ENCODE measurements at regions of chr2 and their contacts with region 1.

Region 1: DNA sequence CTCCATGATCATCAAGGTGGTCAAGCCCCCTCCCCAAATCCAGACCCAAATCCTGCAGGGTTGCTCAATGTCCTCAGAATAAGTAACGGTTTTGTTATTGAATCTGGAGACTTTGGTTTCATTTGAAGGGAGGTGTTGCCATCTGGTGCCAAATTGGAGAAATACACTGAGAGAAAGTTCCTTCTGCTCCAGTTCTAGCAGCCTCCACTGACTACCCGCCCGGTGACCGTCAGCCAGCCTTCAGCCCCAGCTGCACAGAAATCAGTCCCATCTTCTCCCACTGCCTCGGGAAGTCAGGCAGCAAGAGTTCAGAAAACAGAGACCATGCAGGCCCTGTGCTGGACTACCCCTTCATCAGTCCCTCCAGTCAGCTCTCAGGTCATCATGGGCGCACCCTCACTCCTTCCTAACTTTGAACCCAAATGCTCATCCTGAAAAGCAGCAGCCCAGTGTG is 38.7 kb downstream of the PKDCC start:
- DNase-seq: peak; percentile 71 to 80
- ATAC-seq: peak; percentile 69 to 84
- H3K4me3 ChIP-seq: no peak overlapping the region
- H3K27ac ChIP-seq: peak overlapping the region; percentile 73 to 80
- H3K4me1 ChIP-seq: peaks cover 48% of the 10 kb centered on the region
- CTCF ChIP-seq: peak; percentile 98
- EP300 ChIP-seq: no peak
- POLR2A ChIP-seq: no peak
- RAD21 ChIP-seq: peak; percentile 99 to 100

Region 2: GRCh38 chr2:41686156-41686555 is 400.4 kb before region 1 on chr2:
- CTCF ChIA-PET with region 1: no interaction called
- POLR2A ChIA-PET with region 1: no interaction called
- DNase-seq: no peak
- ATAC-seq: no peak
- H3K4me3 ChIP-seq: no peak overlapping the region
- H3K27ac ChIP-seq: no peak overlapping the region
- H3K4me1 ChIP-seq: no peaks in the 10 kb centered on the region
- CTCF ChIP-seq: no peak
- EP300 ChIP-seq: no peak
- POLR2A ChIP-seq: no peak
- RAD21 ChIP-seq: no peak

Region 3: DNA sequence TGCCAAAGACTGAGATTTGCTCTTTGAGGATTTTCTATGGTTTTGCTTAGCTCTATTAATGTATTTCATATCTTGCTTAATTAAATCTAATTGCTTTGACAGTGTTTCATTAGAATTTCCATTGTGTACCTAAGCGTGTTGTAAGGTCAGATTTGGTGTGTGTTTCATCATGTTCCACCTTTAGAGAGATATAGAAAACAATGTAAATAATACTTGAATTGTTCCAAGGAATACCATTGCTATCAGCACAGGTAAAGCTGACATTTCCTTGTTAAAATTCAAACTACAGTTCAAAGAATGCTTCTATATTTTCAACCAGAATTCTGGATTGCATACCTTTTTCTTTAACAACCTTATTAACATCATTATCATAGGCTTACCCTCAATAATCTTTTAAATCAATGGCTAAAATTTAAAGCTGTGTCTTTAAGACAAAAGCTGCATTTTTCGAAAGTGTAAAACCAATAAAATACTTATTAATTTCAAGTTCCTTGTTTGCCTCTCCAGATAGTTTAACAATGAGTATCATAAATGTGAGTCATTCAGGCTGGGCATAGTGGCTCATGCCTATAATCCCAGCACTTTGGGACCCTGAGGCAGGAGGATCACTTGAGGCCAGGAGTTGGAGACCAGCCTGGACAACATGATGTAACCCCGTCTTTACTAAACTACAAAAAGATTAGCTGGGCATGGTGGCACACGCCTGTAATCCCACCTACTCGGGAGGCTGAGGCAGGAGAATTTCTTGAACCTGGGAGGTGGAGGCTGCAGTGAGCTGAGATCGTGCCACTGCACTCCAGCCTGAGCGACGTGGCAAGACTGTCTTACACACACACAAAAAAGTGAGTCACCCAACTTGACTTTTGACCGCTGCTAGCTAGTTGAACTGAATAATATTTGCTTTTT is 226.7 kb before region 1 on chr2:
- CTCF ChIA-PET with region 1: interaction called, 761 read pairs
- POLR2A ChIA-PET with region 1: no interaction called
- DNase-seq: peak; percentile 48 to 86
- ATAC-seq: peak; percentile 83 to 96
- H3K4me3 ChIP-seq: no peak overlapping the region
- H3K27ac ChIP-seq: peak overlapping the region; percentile 69 to 86
- H3K4me1 ChIP-seq: peaks cover 25% of the 10 kb centered on the region
- CTCF ChIP-seq: no peak
- EP300 ChIP-seq: peak; percentile 25 to 53; a peak in 2 of 5 replicates
- POLR2A ChIP-seq: no peak
- RAD21 ChIP-seq: peak; percentile 15; a peak in 1 of 5 replicates

Region 4: GRCh38 chr2:41886757-41887156 is 199.8 kb before region 1 on chr2:
- CTCF ChIA-PET with region 1: interaction called, 55 read pairs
- POLR2A ChIA-PET with region 1: no interaction called
- DNase-seq: no peak
- ATAC-seq: no peak
- H3K4me3 ChIP-seq: no peak overlapping the region
- H3K27ac ChIP-seq: 0 out of 6 replicates have a peak overlapping the region, but pooled peaks of 1 of the 2 experiments have one; percentile 6
- H3K4me1 ChIP-seq: 0 out of 3 replicates have a peak, but pooled peaks cover 4% of the 10 kb centered on the region
- CTCF ChIP-seq: no peak
- EP300 ChIP-seq: no peak
- POLR2A ChIP-seq: no peak
- RAD21 ChIP-seq: no peak

Region 5: GRCh38 chr2:41933585-41934320 is 152.8 kb before region 1 on chr2:
- CTCF ChIA-PET with region 1: interaction called, 26 read pairs
- POLR2A ChIA-PET with region 1: no interaction called
- DNase-seq: peak; percentile 79 to 88
- ATAC-seq: peak; percentile 74 to 75
- H3K4me3 ChIP-seq: no peak overlapping the region
- H3K27ac ChIP-seq: peak overlapping the region; percentile 74 to 91
- H3K4me1 ChIP-seq: peaks cover 88% of the 10 kb centered on the region
- CTCF ChIP-seq: no peak
- EP300 ChIP-seq: peak; percentile 79 to 93; a peak in 4 of 5 replicates
- POLR2A ChIP-seq: no peak
- RAD21 ChIP-seq: peak in 1 of 2 experiments; percentile 34; a peak in 1 of 5 replicates

Region 6: GRCh38 chr2:42060718-42061619 is 25.6 kb before region 1 on chr2:
- CTCF ChIA-PET with region 1: interaction called, 146 read pairs
- POLR2A ChIA-PET with region 1: no interaction called
- DNase-seq: no peak
- ATAC-seq: no peak
- H3K4me3 ChIP-seq: no peak overlapping the region
- H3K27ac ChIP-seq: peak overlapping the region; percentile 34 to 67; a peak in 4 of 6 replicates
- H3K4me1 ChIP-seq: peaks cover 60% of the 10 kb centered on the region
- CTCF ChIP-seq: no peak
- EP300 ChIP-seq: no peak
- POLR2A ChIP-seq: no peak
- RAD21 ChIP-seq: no peak

Region 7: DNA sequence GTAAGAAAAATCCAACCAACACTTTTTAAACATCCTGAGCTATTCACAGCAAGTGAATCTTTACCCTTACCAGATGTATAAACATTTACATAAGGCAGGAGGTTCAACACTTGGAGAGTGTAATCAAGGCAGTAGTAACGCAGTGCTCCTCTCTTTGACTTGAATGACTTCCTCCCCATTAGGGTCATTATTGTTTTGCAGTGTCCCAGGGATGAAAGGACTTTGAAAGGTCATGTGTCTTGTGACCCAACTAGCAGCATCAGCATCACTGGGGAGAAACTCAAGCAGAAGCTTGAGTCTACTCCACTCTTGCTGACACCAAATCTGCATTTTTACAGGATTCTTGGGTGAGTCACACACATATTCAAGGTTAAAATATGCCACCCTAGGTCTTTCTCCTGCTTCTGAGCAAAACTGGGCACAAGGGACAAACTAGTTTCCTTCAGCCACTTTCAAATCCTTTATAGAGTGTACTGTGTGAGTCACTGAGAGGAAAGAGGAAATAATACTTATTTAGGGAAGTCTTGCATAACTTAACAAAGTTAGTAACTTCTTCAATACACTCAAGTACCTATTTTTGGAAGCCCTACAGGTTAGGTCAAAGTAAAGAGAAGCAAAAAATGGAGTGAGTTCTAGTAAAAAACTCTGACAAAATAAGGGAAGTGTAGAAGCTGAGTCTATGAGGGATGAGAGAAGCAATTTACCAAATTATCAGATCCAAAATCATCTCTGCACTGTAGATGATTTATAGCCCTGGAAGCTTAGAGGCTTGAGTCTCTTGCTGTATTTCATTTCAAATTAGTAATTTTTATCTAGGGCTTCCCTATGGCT is 31.6 kb after region 1 on chr2:
- CTCF ChIA-PET with region 1: interaction called, 12 read pairs
- POLR2A ChIA-PET with region 1: no interaction called
- DNase-seq: peak in 1 of 2 experiments; percentile 86
- ATAC-seq: peak; percentile 90 to 91
- H3K4me3 ChIP-seq: no peak overlapping the region
- H3K27ac ChIP-seq: peak overlapping the region; percentile 60 to 63
- H3K4me1 ChIP-seq: peaks cover 34% of the 10 kb centered on the region
- CTCF ChIP-seq: no peak
- EP300 ChIP-seq: peak in 1 of 2 experiments; percentile 67; a peak in 2 of 5 replicates
- POLR2A ChIP-seq: no peak
- RAD21 ChIP-seq: peak; percentile 34 to 40; a peak in 4 of 5 replicates

Region 8: GRCh38 chr2:42238644-42239288 is 152.2 kb after region 1 on chr2:
- CTCF ChIA-PET with region 1: interaction called, 11 read pairs
- POLR2A ChIA-PET with region 1: no interaction called
- DNase-seq: peak in 1 of 2 experiments; percentile 76
- ATAC-seq: peak; percentile 97 to 98
- H3K4me3 ChIP-seq: no peak overlapping the region
- H3K27ac ChIP-seq: 0 out of 6 replicates have a peak overlapping the region, but pooled peaks of 1 of the 2 experiments have one; percentile 5
- H3K4me1 ChIP-seq: peaks cover 29% of the 10 kb centered on the region
- CTCF ChIP-seq: peak; percentile 80
- EP300 ChIP-seq: no peak
- POLR2A ChIP-seq: no peak
- RAD21 ChIP-seq: peak; percentile 93 to 95